PC-9 (cell line): ENCODE measurements at regions of chr10 and their contacts with region 1.

Region 1: GRCh38 chr10:6920072-6921019 is 340.3 kb upstream of the PRKCQ start:
- DNase-seq: peak in 1 of 2 experiments; percentile 31
- H3K4me3 ChIP-seq: no peak overlapping the region
- H3K27ac ChIP-seq: no peak overlapping the region
- H3K4me1 ChIP-seq: no peaks in the 10 kb centered on the region
- H3K27me3 ChIP-seq: no peaks in the 10 kb centered on the region
- CTCF ChIP-seq: peak; percentile 43; the same call in 1 of the 2 replicates

Region 2: DNA sequence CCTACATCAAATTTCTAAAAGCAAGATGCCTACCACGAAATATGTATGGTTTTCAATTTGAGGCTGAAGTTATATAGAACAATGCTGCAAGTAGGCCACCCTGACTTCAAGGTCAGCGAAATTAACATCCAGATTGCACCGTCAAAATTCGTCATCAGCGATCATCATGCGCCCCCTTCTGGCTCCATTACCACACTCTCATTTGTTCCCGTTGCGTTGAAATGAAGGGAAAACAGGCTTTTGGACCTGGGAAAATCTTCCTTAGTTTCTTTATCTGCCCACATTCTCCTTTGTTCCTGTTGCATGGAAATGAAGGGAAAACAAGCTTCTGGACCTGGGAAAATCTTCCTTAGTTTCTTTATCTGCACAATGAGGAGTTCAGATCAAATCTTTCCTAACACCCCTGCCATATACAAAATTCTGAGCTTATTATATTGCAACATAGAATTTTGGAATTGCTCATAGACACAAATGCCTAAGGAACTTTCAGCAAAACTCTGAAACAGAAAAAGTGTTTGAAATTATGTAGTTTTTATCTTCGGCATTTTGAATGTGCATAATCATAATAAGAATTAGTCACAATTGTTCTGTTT is 242.0 kb before region 1 on chr10:
- CTCF ChIA-PET with region 1: no interaction called
- POLR2A ChIA-PET with region 1: interaction called, 13 read pairs
- intact Hi-C with region 1: no loop called
- DNase-seq: peak in 1 of 2 experiments; percentile 35
- H3K4me3 ChIP-seq: no peak overlapping the region
- H3K27ac ChIP-seq: no peak overlapping the region
- H3K4me1 ChIP-seq: no peaks in the 10 kb centered on the region
- H3K27me3 ChIP-seq: 0 out of 2 replicates have a peak, but pooled peaks cover 2% of the 10 kb centered on the region
- CTCF ChIP-seq: peak; percentile 69

Region 3: GRCh38 chr10:6843481-6843881 is 76.9 kb before region 1 on chr10:
- CTCF ChIA-PET with region 1: no interaction called
- POLR2A ChIA-PET with region 1: no interaction called
- intact Hi-C with region 1: no loop called
- DNase-seq: no peak
- H3K4me3 ChIP-seq: no peak overlapping the region
- H3K27ac ChIP-seq: no peak overlapping the region
- H3K4me1 ChIP-seq: no peaks in the 10 kb centered on the region
- H3K27me3 ChIP-seq: no peaks in the 10 kb centered on the region
- CTCF ChIP-seq: no peak